Activated T-helper 2 cell treated with anti-CD3 and anti-CD28 coated beads, Interferon-gamma antibody, Interleukin-2, Interleukin-4, amounts not matched to agents 10 μg/mL and 5 μg/mL and 100 μg/mL, durations not matched to agents 14 hours and 24 hours and 36 hours (primary cell): ENCODE measurements at regions of chr10 and their contacts with region 1.

Region 1: GRCh38 chr10:77710759-77711682 is 73.4 kb upstream of the KCNMA1 start:
- DNase-seq: peak; percentile 60
- H3K4me3 Mint-ChIP-seq: peak overlapping the region; percentile 27
- H3K27ac Mint-ChIP-seq: no peak overlapping the region
- H3K4me1 Mint-ChIP-seq: peaks cover 6% of the 10 kb centered on the region
- H3K27me3 Mint-ChIP-seq: peaks cover 30% of the 10 kb centered on the region

Region 2: GRCh38 chr10:77165445-77166208 is 545.4 kb before region 1 on chr10:
- intact Hi-C with region 1: loop called (anchors 5 kb)
- DNase-seq: peak; percentile 10
- H3K4me3 Mint-ChIP-seq: no peak overlapping the region
- H3K27ac Mint-ChIP-seq: no peak overlapping the region
- H3K4me1 Mint-ChIP-seq: peaks cover 3% of the 10 kb centered on the region
- H3K27me3 Mint-ChIP-seq: peaks cover 19% of the 10 kb centered on the region

Region 3: GRCh38 chr10:77756319-77757232 is 45.6 kb after region 1 on chr10:
- intact Hi-C with region 1: loop called (anchors 5 kb)
- DNase-seq: no peak
- H3K4me3 Mint-ChIP-seq: no peak overlapping the region
- H3K27ac Mint-ChIP-seq: no peak overlapping the region
- H3K4me1 Mint-ChIP-seq: no peaks in the 10 kb centered on the region
- H3K27me3 Mint-ChIP-seq: peaks cover 28% of the 10 kb centered on the region